Naive thymus-derived CD4-positive, alpha-beta T cell (primary cell): ENCODE measurements at regions of chr14 and their contacts with region 1.

Region 1: GRCh38 chr14:23301288-23301968 is 1.2 kb downstream of the PPP1R3E start:
- DNase-seq: peak; percentile 93 to 99 (median 98)
- ATAC-seq: peak; percentile 86
- H3K4me3 ChIP-seq: peak overlapping the region; percentile 98
- H3K4me3 Mint-ChIP-seq: peak overlapping the region; percentile 89 to 100 (median 98)
- H3K27ac ChIP-seq: peak overlapping the region; percentile 95
- H3K27ac Mint-ChIP-seq: peak overlapping the region; percentile 92 to 99 (median 97)
- H3K4me1 ChIP-seq: peaks cover 0 to 15% of the 10 kb centered on the region in 2 donors
- H3K4me1 Mint-ChIP-seq: peaks cover 7 to 41% (median 26%) of the 10 kb centered on the region in 7 donors
- H3K27me3 ChIP-seq: no peaks in the 10 kb centered on the region
- H3K27me3 Mint-ChIP-seq: peaks cover 8 to 15% (median 12%) of the 10 kb centered on the region in 5 donors

Region 2: GRCh38 chr14:22589096-22589839 is 712.2 kb before region 1 on chr14 and contains the start of gene DAD1:
- CTCF ChIA-PET with region 1: no interaction called
- POLR2A ChIA-PET with region 1: no interaction called
- intact Hi-C with region 1: loop called (anchors 5 kb)
- DNase-seq: peak; percentile 100
- ATAC-seq: peak; percentile 94
- H3K4me3 ChIP-seq: peak within 1 kb of the TSS; percentile 81
- H3K4me3 Mint-ChIP-seq: peak within 1 kb of the TSS; percentile 83 to 99 (median 96)
- H3K27ac ChIP-seq: peak within 1 kb of the TSS; percentile 96
- H3K27ac Mint-ChIP-seq: peak within 1 kb of the TSS; percentile 90 to 100 (median 99)
- H3K4me1 ChIP-seq: peaks cover 30 to 38% of the 10 kb centered on the region in 2 donors
- H3K4me1 Mint-ChIP-seq: peaks cover 34 to 62% (median 53%) of the 10 kb centered on the region in 7 donors
- H3K27me3 ChIP-seq: no peaks in the 10 kb centered on the region
- H3K27me3 Mint-ChIP-seq: peaks cover 0 to 17% (median 0%) of the 10 kb centered on the region in 5 donors
- total RNA-seq, gene DAD1: 68.8 to 157 (median 117) TPM

Region 3: GRCh38 chr14:22955702-22956569 is 345.5 kb before region 1 on chr14:
- CTCF ChIA-PET with region 1: no interaction called
- POLR2A ChIA-PET with region 1: interaction called, 3 read pairs
- intact Hi-C with region 1: loop called in 1 of 2 experiments (anchors 1 kb)
- DNase-seq: no peak
- ATAC-seq: no peak
- H3K4me3 ChIP-seq: peak overlapping the region; percentile 64
- H3K4me3 Mint-ChIP-seq: peak overlapping the region; percentile 87 to 95 (median 93)
- H3K27ac ChIP-seq: peak overlapping the region; percentile 85
- H3K27ac Mint-ChIP-seq: peak overlapping the region; percentile 88 to 96 (median 92)
- H3K4me1 ChIP-seq: peaks cover 0 to 6% of the 10 kb centered on the region in 2 donors
- H3K4me1 Mint-ChIP-seq: peaks cover 0 to 31% (median 19%) of the 10 kb centered on the region in 7 donors
- H3K27me3 ChIP-seq: no peaks in the 10 kb centered on the region
- H3K27me3 Mint-ChIP-seq: peaks cover 0 to 4% (median 0%) of the 10 kb centered on the region in 5 donors

Region 4: DNA sequence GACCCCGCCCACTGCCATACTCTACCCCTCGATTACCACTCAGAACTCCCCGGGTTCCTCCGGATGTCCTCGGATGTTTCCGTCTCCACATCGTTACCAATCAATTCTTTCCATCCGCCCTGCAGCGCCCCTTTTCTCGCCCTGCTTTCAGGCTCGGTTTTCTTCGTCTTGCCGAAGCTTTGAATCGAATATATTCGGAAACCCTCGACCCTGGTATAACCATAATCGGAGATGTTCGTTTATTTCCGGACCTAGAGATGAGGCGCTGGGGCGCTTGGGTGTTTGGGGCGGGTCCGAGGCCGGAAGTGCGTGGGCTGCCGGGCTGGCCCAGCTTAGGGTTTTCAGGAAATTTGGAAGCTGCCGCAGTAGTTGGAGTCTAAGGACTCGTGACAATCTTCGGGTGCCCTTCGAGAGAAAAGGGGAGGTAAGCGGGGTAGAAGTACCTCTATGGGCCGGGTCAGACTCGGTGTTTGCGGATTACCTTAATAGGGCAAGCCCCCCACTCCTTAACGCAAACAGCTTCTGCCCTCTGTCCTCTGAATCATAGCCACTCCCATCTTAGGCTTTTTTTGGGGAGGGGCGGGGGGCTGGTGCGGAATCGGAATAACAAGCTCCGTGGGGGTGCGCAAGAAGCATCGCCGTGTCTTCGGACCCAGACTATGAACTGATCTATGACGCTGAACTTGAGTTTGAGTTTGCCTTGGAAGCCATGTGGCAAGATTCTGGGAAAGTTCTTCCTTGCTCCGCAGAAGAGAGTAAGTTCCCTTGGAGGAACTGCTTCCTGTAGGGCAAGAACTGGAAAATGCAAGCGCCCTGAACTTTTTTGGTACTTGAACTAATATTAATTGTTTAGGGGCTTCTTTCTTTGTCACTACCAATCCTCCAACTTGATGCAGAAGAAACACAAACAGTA is 206.0 kb before region 1 on chr14 and contains the start of gene C14orf119:
- CTCF ChIA-PET with region 1: no interaction called
- POLR2A ChIA-PET with region 1: interaction called, 37 read pairs
- intact Hi-C with region 1: loop called (anchors 1 kb)
- DNase-seq: peak in 8 of 9 donors; percentile 88 to 100 (median 100)
- ATAC-seq: peak; percentile 93
- H3K4me3 ChIP-seq: peak within 1 kb of the TSS; percentile 88
- H3K4me3 Mint-ChIP-seq: no peak within 1 kb of the TSS
- H3K27ac ChIP-seq: peak within 1 kb of the TSS; percentile 97
- H3K27ac Mint-ChIP-seq: no peak within 1 kb of the TSS
- H3K4me1 ChIP-seq: peaks cover 26 to 32% of the 10 kb centered on the region in 2 donors
- H3K4me1 Mint-ChIP-seq: peaks cover 3 to 63% (median 33%) of the 10 kb centered on the region in 7 donors
- H3K27me3 ChIP-seq: no peaks in the 10 kb centered on the region
- H3K27me3 Mint-ChIP-seq: no peaks in the 10 kb centered on the region
- total RNA-seq, gene C14orf119: 6.0 to 49.9 (median 43.4) TPM

Region 5: DNA sequence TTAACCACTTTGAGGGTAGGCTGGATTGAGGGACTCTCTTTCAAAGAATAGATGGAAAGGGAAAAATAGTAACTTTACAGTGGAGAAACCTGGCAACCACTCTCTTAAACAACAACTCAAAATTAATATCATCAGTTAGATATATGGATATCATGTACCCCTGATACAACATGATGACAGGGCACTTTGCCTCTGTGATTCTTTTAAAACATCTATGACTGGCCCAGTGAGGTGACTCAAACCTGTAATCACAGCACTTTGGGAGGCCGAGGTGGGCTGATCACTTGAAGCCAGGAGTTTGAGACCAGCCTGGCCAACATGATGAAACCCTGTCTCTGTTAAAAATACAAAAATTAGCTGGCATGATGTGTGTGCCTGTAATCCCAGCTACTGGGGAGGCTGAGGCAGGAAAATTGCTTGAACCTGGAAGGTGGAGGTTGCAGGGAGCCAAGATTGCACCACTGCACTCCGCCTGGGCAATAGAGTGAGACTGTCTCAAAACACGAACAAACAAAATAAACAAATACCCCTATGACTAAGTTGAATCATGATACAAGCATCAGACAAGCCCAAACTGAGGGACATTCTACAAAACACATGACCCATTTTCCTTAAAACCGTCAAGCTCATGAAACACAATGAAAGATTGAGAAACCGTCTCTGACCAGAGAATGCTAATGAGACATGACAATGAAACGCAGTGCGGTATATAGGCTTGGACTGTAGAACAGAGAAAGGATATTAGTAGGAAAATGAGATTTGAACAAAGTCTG is 91.6 kb before region 1 on chr14:
- CTCF ChIA-PET with region 1: no interaction called
- POLR2A ChIA-PET with region 1: no interaction called
- intact Hi-C with region 1: no loop called
- DNase-seq: no peak
- ATAC-seq: no peak
- H3K4me3 ChIP-seq: no peak overlapping the region
- H3K4me3 Mint-ChIP-seq: no peak overlapping the region
- H3K27ac ChIP-seq: no peak overlapping the region
- H3K27ac Mint-ChIP-seq: no peak overlapping the region
- H3K4me1 ChIP-seq: no peaks in the 10 kb centered on the region
- H3K4me1 Mint-ChIP-seq: no peaks in the 10 kb centered on the region
- H3K27me3 ChIP-seq: no peaks in the 10 kb centered on the region
- H3K27me3 Mint-ChIP-seq: peaks cover 5 to 31% (median 21%) of the 10 kb centered on the region in 5 donors

Region 6: GRCh38 chr14:23320774-23321571 is 19.5 kb after region 1 on chr14 and contains the start of gene PABPN1:
- CTCF ChIA-PET with region 1: interaction called, 41 read pairs
- POLR2A ChIA-PET with region 1: interaction called, 286 read pairs
- intact Hi-C with region 1: loop called (anchors 1 kb)
- DNase-seq: peak; percentile 87 to 100 (median 99)
- ATAC-seq: peak; percentile 91
- H3K4me3 ChIP-seq: peak within 1 kb of the TSS; percentile 84
- H3K4me3 Mint-ChIP-seq: peak within 1 kb of the TSS; percentile 91 to 97 (median 93)
- H3K27ac ChIP-seq: peak within 1 kb of the TSS; percentile 96
- H3K27ac Mint-ChIP-seq: peak within 1 kb of the TSS; percentile 96 to 99 (median 98)
- H3K4me1 ChIP-seq: peaks cover 22% of the 10 kb centered on the region in 2 donors
- H3K4me1 Mint-ChIP-seq: peaks cover 22 to 38% (median 32%) of the 10 kb centered on the region in 7 donors
- H3K27me3 ChIP-seq: no peaks in the 10 kb centered on the region
- H3K27me3 Mint-ChIP-seq: peaks cover 0 to 3% (median 0%) of the 10 kb centered on the region in 5 donors
- total RNA-seq, gene PABPN1: 176 to 213 (median 196) TPM

Region 7: GRCh38 chr14:23555882-23556699 is 254.7 kb after region 1 on chr14 and contains the start of gene THTPA:
- CTCF ChIA-PET with region 1: no interaction called
- POLR2A ChIA-PET with region 1: no interaction called
- intact Hi-C with region 1: loop called (anchors 1 to 5 kb)
- DNase-seq: peak; percentile 84 to 96 (median 89)
- ATAC-seq: peak; percentile 94
- H3K4me3 ChIP-seq: peak within 1 kb of the TSS; percentile 84
- H3K4me3 Mint-ChIP-seq: peak within 1 kb of the TSS; percentile 80 to 99 (median 96)
- H3K27ac ChIP-seq: peak within 1 kb of the TSS; percentile 83
- H3K27ac Mint-ChIP-seq: peak within 1 kb of the TSS; percentile 78 to 97 (median 94)
- H3K4me1 ChIP-seq: peaks cover 10 to 16% of the 10 kb centered on the region in 2 donors
- H3K4me1 Mint-ChIP-seq: peaks cover 18 to 45% (median 38%) of the 10 kb centered on the region in 7 donors
- H3K27me3 ChIP-seq: no peaks in the 10 kb centered on the region
- H3K27me3 Mint-ChIP-seq: peaks cover 0 to under 1% (median 0%) of the 10 kb centered on the region in 5 donors
- total RNA-seq, gene THTPA: 16.4 to 26.7 (median 19.2) TPM

Region 8: DNA sequence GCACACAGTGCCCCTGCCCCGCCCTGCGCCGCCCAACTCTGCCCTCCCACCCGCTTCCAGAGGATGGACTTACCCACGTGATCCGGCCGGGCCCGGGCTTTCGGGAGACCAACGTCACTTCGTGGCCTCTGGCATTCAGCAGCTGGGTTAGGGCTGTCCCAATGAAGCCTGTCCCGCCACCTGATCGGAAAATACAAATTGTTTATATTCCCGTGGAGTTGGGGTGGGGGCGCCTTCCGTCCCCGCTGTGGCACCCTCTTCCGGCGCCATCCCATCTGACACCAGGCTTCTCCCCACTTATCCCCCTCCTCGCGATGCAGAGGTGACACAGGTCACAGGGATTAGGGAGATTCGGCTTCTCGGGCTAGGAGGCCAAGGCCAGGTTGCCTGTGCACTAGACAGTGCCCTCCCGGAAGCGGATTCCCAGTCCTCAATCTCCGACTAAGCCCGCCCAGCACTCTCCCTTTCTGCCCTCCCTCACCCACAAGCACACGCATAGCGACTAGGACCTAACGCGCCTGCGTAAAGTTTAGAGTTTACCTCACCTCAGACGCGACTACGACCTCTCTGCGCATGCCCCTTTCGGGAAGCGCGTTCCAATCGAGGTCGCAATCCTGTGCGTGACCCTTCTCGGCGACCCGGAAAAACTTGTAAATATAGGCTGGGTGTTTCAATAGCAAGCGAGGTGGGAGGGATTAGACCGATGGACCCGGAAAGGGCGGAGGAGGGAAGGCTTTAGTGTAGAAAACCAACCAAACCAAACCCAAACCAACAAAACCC is 1141.0 kb after region 1 on chr14 and contains the start of gene SDR39U1:
- CTCF ChIA-PET with region 1: no interaction called
- POLR2A ChIA-PET with region 1: no interaction called
- intact Hi-C with region 1: loop called in 1 of 2 experiments (anchors 5 kb)
- DNase-seq: peak; percentile 81 to 99 (median 98)
- ATAC-seq: peak; percentile 93
- H3K4me3 ChIP-seq: peak within 1 kb of the TSS; percentile 85
- H3K4me3 Mint-ChIP-seq: peak within 1 kb of the TSS; percentile 91 to 98 (median 95)
- H3K27ac ChIP-seq: peak within 1 kb of the TSS; percentile 98
- H3K27ac Mint-ChIP-seq: peak within 1 kb of the TSS; percentile 92 to 99 (median 98)
- H3K4me1 ChIP-seq: peaks cover 20 to 32% of the 10 kb centered on the region in 2 donors
- H3K4me1 Mint-ChIP-seq: peaks cover 27 to 57% (median 49%) of the 10 kb centered on the region in 7 donors
- H3K27me3 ChIP-seq: no peaks in the 10 kb centered on the region
- H3K27me3 Mint-ChIP-seq: peaks cover 0 to 3% (median 0%) of the 10 kb centered on the region in 5 donors
- total RNA-seq, gene SDR39U1: 64.7 to 137 (median 96.2) TPM